AG04450 (cell line): ENCODE measurements at regions of chr5 and their contacts with region 1.

Region 1: GRCh38 chr5:32504989-32505596 is 60.6 kb upstream of the ZFR start:
- DNase-seq: peak; percentile 95
- H3K4me3 ChIP-seq: peak overlapping the region; percentile 38; the same call in 1 of the 2 replicates
- H3K27ac ChIP-seq: peak overlapping the region; percentile 89
- H3K27me3 ChIP-seq: no peaks in the 10 kb centered on the region
- CTCF ChIP-seq: no peak

Region 2: GRCh38 chr5:32014096-32014745 is 490.9 kb before region 1 on chr5:
- CTCF ChIA-PET with region 1: no interaction called
- POLR2A ChIA-PET with region 1: no interaction called
- DNase-seq: no peak
- H3K4me3 ChIP-seq: no peak overlapping the region
- H3K27ac ChIP-seq: no peak overlapping the region
- H3K27me3 ChIP-seq: peaks cover 9% of the 10 kb centered on the region
- CTCF ChIP-seq: no peak

Region 3: DNA sequence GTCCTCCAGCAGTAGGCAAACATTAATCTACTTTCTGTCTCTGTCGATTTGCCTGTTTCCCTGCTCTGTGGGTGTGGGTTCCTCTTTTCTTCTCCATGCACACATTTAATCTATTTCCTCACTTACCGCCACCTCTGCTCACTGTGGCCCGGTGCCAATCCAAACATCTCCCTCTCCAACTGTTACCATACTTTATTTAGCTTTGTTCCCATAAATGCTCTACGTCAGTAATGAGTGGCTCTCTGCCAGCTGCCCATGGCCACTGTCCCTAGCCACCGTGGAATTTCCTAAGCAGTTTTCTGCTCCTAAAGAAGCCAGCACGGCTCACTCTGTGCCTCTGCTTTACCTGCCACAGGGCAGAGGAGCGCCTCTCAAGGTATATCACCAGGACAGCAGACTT is 311.5 kb before region 1 on chr5:
- CTCF ChIA-PET with region 1: no interaction called
- POLR2A ChIA-PET with region 1: no interaction called
- DNase-seq: no peak
- H3K4me3 ChIP-seq: no peak overlapping the region
- H3K27ac ChIP-seq: no peak overlapping the region
- H3K27me3 ChIP-seq: no peaks in the 10 kb centered on the region
- CTCF ChIP-seq: no peak

Region 4: GRCh38 chr5:32531885-32532520 is 26.9 kb after region 1 on chr5:
- CTCF ChIA-PET with region 1: interaction called, 3 read pairs
- POLR2A ChIA-PET with region 1: interaction called, 10 read pairs
- DNase-seq: no peak
- H3K4me3 ChIP-seq: peak overlapping the region; percentile 40
- H3K27ac ChIP-seq: peak overlapping the region; percentile 34
- H3K27me3 ChIP-seq: no peaks in the 10 kb centered on the region
- CTCF ChIP-seq: no peak

Region 5: DNA sequence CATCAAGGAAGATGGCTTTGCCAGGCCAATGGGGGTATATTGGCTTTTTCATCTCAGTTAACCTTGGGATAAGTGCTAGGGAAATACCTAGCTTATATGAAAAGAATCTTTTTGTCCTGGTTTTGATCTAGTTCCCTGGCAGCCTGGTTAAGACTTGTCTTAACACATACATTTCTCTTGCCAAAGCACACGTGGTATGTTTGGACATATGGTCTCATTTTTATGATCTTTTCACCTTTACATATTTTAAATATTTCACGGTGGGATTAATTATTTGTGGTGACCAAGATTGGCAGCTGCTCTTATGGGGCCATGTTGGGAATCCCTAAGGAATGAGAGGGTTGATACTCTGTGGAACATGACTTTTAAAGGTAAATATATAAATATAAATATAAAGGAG is 518.6 kb after region 1 on chr5:
- CTCF ChIA-PET with region 1: no interaction called
- POLR2A ChIA-PET with region 1: no interaction called
- DNase-seq: no peak
- H3K4me3 ChIP-seq: no peak overlapping the region
- H3K27ac ChIP-seq: no peak overlapping the region
- H3K27me3 ChIP-seq: no peaks in the 10 kb centered on the region
- CTCF ChIP-seq: no peak